SK-N-SH (cell line): ENCODE measurements at regions of chr19 and their contacts with region 1.

Region 1: DNA sequence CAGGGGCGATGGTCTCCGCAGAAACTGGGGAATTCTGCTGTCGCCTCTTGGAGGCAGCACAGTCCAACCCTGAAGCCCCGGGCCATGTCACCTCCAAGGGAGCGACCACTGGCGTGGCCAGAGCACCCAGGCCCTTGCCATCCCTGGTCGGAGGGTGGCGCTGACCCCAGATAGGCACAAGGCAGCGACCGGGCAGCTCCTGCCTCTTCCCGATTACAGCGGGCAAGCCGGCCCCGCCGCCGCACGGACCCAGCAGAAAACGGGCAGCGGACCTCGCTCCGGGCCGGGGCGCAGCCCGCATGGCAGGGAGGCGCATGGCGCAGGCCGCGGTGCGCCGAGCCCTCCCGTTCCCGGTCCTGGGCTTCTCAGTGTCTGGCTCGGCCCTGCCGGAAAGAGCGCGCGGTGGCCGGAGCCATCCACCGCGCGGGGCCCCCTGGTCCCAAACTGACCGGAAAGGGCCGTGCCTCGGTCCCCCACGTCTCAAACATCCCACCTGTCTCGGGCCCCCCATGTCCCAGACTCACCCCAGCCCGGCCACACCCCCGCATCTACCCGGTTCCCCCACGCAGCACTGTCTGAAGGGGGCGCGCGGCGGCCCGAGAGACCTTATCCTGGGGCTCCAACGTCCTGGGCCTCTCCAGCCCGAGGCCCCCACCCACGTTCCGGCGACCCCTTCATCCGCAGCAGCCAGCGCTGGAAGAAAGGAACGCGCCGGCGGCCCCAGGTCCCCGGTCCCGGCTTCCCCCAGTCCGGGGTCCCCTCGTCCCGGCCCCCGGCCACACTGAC is 727 bp downstream of the CERS1 start:
- DNase-seq: peak; percentile 95
- H3K4me3 ChIP-seq: peak overlapping the region; percentile 61 to 72
- H3K27ac ChIP-seq: peak overlapping the region in 1 of 2 experiments; percentile 65; a peak in 1 of 4 replicates
- H3K4me1 ChIP-seq: peaks cover 0 to 24% of the 10 kb centered on the region in 2 experiments; a peak in 1 of 4 replicates
- H3K27me3 ChIP-seq: no peaks in the 10 kb centered on the region
- CTCF ChIP-seq: peak; percentile 53
- EP300 ChIP-seq: no peak
- RAD21 ChIP-seq: peak; percentile 71

Region 2: DNA sequence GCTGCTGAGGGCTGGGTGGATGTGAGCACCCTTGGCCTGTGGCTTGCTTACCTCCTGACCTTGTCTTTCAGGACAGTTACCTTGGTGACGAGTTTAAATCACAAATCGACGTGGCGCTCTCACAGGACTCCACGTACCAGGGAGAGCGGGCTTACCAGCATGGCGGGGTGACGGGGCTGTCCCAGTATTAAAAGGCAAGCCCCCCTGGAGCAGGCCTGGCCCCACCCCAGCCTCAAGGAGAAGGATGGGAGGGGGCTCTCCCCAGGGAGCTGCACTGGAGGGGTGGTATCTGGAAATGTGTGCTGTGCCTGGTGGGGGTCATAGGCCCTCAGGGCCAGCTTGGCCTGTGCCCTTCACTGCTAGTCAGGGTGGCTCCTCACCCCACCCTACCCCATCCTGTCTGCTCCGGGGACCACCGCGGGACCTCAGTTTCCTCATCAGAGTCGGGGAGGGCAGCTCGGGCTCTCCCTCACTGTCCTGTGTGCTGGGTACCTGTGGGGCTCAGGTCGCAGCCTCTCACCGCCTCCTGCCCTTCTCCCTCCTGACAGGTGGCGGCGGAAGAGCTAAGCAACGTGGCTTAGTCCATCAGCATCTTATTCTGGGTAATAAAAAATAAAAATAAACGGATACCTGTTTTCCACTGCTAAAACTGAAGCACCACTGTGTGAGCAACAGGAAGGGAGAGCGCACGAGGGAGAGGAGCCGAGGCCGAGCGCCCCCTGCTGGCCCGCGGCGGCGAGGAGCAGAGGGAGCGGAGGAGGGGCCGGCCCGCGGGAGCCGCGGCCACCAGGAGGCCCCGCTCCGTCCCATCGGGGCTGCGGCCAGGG is 29.0 kb before region 1 on chr19:
- CTCF ChIA-PET with region 1: interaction called, 21 read pairs
- POLR2A ChIA-PET with region 1: no interaction called
- DNase-seq: peak; percentile 98
- H3K4me3 ChIP-seq: peak overlapping the region in 1 of 2 experiments; percentile 53; a peak in 1 of 4 replicates
- H3K27ac ChIP-seq: no peak overlapping the region
- H3K4me1 ChIP-seq: no peaks in the 10 kb centered on the region
- H3K27me3 ChIP-seq: no peaks in the 10 kb centered on the region
- CTCF ChIP-seq: peak; percentile 99
- EP300 ChIP-seq: no peak
- RAD21 ChIP-seq: peak; percentile 74

Region 3: DNA sequence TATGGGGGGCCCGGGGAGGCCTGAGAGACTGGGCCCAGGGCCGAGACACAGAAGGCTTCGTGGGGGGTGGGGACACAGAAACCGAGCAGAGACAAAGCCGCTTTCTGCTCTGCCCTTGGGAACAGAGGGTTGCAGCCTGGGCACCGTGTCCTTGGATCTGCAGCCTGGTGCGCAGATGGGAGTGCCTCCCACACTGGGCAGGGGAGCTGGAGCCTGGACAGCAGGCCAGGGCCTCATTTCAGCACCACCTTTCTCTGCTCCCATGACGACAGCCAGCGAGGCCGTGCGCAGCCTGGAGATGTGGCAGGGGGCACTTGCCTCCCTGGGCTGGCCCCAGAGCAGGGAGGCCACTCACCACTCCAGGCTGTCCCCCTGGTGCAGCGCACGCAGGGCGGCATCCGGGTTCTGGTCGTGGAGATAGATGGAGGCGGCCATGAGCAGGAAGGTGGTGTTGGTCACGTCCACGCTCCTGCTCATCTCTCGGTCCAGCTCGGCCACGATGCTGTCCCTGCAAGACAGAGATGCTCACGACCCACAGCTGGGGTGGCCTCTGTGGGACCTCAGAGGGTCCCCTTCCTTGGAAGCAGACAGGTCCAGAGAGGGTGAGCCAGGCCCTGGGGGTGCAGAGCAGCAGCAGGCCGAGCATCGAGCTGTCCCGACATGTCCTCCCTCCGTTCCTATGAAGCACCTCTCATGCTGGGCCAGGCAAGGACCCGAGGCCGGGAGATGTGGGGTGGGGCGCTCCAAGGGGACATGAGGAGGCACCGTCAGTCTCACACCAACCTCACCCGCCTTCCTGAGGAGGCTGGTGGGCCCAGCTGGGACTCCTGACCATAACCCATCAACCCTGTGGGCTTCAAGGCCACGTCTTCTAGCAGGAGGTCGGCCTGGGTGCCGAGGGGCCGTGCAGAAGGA is 11.6 kb after region 1 on chr19:
- CTCF ChIA-PET with region 1: interaction called, 22 read pairs
- POLR2A ChIA-PET with region 1: interaction called, 3 read pairs
- DNase-seq: no peak
- H3K4me3 ChIP-seq: no peak overlapping the region
- H3K27ac ChIP-seq: no peak overlapping the region
- H3K4me1 ChIP-seq: no peaks in the 10 kb centered on the region
- H3K27me3 ChIP-seq: no peaks in the 10 kb centered on the region
- CTCF ChIP-seq: no peak
- EP300 ChIP-seq: no peak
- RAD21 ChIP-seq: no peak

Region 4: GRCh38 chr19:18924684-18925213 is 29.5 kb after region 1 on chr19:
- CTCF ChIA-PET with region 1: interaction called, 76 read pairs
- POLR2A ChIA-PET with region 1: interaction called, 8 read pairs
- DNase-seq: no peak
- H3K4me3 ChIP-seq: no peak overlapping the region
- H3K27ac ChIP-seq: no peak overlapping the region
- H3K4me1 ChIP-seq: peaks cover 0 to 9% of the 10 kb centered on the region in 2 experiments; a peak in 1 of 4 replicates
- H3K27me3 ChIP-seq: no peaks in the 10 kb centered on the region
- CTCF ChIP-seq: no peak
- EP300 ChIP-seq: no peak
- RAD21 ChIP-seq: no peak